Activated naive CD4-positive, alpha-beta T cell treated with anti-CD3 and anti-CD28 coated beads for 36 hours (primary cell): ENCODE measurements at regions of chr2 and their contacts with region 1.

Region 1: DNA sequence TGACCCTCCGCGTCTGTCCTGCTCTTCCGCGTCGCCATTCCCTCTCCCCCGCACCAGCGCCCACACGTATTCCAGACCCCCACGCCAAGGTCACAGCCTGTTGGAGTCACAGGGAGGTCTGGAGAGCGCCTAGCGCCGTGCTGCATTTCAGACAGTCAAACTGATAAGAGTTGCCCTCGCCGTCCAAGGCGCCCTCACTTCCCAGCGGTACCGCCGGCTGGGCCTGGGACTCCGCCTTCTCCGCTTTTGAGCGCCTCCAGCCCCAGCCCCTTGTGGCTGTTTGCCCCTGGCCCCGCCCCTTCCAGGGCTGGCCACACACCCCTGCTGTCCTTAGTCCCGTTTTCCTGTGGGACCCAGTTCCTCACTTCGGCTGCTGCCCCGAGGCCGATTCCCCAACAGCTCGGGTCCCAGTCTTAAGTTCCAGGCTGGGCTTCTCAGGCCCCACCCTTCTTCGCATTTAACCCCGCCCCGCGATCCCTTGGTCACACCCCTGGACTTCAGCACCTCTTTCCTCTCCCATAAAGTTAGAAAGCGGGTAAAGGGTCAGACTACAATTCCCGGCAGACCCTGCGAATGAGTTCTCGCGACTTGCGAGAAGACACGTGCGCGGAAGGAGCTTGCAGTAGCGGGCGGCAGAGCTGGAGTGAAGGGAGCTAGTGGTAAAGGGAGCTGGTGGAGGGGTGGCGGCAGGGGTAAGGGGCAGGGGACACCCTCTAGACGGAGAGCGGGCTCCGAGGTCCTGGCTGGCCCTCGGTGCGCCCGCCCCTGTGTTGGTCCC is at the start of gene GMPPA:
- DNase-seq: peak; percentile 98
- H3K4me3 Mint-ChIP-seq: peak within 1 kb of the TSS; percentile 91
- H3K27ac Mint-ChIP-seq: peak within 1 kb of the TSS; percentile 39
- H3K4me1 Mint-ChIP-seq: peaks cover 28% of the 10 kb centered on the region
- H3K27me3 Mint-ChIP-seq: peaks cover 43% of the 10 kb centered on the region
- total RNA-seq, gene GMPPA: 25.2 to 28.4 TPM

Region 2: GRCh38 chr2:219402665-219403515 is 95.6 kb before region 1 on chr2:
- CTCF ChIA-PET with region 1: interaction called, 15 read pairs
- intact Hi-C with region 1: no loop called
- DNase-seq: peak; percentile 76
- H3K4me3 Mint-ChIP-seq: no peak overlapping the region
- H3K27ac Mint-ChIP-seq: no peak overlapping the region
- H3K4me1 Mint-ChIP-seq: no peaks in the 10 kb centered on the region
- H3K27me3 Mint-ChIP-seq: no peaks in the 10 kb centered on the region

Region 3: DNA sequence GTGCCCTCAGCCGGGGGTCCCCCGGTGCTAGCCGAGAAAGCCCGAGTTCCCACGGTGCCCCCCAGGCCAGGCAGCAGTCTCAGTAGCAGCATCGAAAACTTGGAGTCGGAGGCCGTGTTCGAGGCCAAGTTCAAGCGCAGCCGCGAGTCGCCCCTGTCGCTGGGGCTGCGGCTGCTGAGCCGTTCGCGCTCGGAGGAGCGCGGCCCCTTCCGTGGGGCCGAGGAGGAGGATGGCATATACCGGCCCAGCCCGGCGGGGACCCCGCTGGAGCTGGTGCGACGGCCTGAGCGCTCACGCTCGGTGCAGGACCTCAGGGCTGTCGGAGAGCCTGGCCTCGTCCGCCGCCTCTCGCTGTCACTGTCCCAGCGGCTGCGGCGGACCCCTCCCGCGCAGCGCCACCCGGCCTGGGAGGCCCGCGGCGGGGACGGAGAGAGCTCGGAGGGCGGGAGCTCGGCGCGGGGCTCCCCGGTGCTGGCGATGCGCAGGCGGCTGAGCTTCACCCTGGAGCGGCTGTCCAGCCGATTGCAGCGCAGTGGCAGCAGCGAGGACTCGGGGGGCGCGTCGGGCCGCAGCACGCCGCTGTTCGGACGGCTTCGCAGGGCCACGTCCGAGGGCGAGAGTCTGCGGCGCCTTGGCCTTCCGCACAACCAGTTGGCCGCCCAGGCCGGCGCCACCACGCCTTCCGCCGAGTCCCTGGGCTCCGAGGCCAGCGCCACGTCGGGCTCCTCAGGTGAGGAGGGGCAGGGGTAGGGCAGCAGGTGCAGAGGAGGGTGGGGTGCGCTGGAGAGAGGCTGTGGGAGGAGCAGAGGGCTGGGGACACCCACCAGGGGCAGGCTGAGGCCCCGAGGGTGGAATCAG is 13.9 kb before region 1 on chr2:
- CTCF ChIA-PET with region 1: interaction called, 24 read pairs
- intact Hi-C with region 1: no loop called
- DNase-seq: no peak
- H3K4me3 Mint-ChIP-seq: peak overlapping the region; percentile 27
- H3K27ac Mint-ChIP-seq: no peak overlapping the region
- H3K4me1 Mint-ChIP-seq: peaks cover 4% of the 10 kb centered on the region
- H3K27me3 Mint-ChIP-seq: peaks cover 37% of the 10 kb centered on the region

Region 4: DNA sequence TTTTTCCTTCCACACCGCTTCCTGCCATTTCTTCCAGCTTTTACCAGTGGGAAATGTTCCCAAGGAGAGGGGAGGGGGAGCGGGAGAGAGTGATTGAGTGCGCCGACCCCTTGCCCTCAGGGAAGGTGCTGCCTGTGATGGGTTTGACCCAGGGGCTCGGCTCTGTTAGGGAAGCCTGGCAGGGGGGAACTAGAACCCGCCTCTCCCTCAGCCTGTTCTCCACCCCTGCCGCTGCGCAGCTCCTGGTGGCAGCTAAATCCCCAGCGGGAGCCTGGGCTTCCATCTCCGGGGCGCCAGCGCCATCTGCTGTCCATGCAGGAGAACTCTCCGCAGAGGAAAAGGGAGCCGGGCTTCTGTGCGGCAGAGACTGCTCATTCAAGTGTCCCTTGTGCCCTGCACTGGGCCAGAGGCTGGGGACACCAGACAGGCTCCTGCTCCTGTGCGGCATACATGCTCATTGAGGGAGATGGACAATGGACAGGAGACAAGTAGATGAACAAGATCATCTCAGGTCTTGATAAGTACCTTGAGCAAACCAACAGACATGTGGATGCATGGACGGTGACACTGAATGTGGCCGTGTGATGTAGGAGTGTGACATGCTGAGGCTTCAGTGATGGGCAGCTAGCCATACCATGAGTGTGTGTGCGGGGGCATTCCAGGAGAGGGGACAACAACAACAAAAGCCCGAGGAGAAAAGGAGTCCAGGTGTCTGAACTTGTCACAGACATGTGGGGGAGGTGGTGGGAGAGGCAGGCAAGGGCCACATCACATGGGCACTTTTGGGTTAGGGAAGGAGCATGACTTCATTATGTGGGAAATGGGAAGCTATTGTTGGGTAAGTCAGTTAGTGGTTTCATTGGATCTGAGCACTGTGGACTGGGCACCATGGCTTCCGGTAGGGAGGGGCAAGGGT is 31.8 kb after region 1 on chr2:
- CTCF ChIA-PET with region 1: interaction called, 211 read pairs
- intact Hi-C with region 1: loop called (anchors 1 kb)
- DNase-seq: peak; percentile 90
- H3K4me3 Mint-ChIP-seq: no peak overlapping the region
- H3K27ac Mint-ChIP-seq: no peak overlapping the region
- H3K4me1 Mint-ChIP-seq: no peaks in the 10 kb centered on the region
- H3K27me3 Mint-ChIP-seq: peaks cover 52% of the 10 kb centered on the region

Region 5: DNA sequence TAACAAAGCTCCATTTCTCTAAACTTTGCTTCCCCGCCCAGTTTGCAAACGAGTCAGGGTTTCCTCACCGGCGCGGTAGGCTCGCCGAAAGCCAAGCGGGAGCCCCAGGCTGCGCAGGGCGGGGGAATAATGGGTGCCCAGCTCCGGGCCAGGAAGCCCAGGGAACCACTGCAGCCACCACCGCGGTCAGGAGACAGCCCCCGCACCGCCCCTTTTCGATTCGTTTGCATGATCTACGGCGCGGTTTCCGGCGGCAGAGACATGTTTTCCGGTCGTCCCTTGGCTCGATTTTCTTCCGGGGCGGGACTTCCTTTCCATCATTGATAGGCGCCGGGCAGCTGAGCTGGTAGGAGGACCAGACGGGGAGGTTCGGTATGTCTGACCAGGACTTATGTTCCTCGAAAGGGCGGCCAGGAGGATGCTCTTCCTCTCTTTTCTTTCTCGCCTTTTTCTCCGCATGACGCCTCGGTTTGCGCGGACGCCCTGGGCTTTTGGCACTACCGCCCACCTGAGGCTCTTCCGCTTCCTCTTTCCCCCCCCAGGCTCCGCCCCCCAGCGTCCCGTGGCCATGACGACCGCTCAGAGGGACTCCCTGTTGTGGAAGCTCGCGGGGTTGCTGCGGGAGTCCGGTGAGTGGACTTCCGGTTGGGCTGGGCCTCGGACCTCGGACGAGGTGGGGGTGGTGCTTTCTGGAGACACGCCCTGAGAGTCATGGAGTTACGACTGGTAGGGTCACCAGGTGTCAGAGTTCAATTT is 99.3 kb after region 1 on chr2 and contains the start of gene STK11IP:
- CTCF ChIA-PET with region 1: interaction called, 4 read pairs
- intact Hi-C with region 1: loop called (anchors 1 kb)
- DNase-seq: peak; percentile 96
- H3K4me3 Mint-ChIP-seq: peak within 1 kb of the TSS; percentile 94
- H3K27ac Mint-ChIP-seq: peak within 1 kb of the TSS; percentile 94
- H3K4me1 Mint-ChIP-seq: peaks cover 10% of the 10 kb centered on the region
- H3K27me3 Mint-ChIP-seq: no peaks in the 10 kb centered on the region
- total RNA-seq, gene STK11IP: 32.1 TPM